T-cell (primary cell): ENCODE measurements at regions of chr15 and their contacts with region 1.

Region 1: DNA sequence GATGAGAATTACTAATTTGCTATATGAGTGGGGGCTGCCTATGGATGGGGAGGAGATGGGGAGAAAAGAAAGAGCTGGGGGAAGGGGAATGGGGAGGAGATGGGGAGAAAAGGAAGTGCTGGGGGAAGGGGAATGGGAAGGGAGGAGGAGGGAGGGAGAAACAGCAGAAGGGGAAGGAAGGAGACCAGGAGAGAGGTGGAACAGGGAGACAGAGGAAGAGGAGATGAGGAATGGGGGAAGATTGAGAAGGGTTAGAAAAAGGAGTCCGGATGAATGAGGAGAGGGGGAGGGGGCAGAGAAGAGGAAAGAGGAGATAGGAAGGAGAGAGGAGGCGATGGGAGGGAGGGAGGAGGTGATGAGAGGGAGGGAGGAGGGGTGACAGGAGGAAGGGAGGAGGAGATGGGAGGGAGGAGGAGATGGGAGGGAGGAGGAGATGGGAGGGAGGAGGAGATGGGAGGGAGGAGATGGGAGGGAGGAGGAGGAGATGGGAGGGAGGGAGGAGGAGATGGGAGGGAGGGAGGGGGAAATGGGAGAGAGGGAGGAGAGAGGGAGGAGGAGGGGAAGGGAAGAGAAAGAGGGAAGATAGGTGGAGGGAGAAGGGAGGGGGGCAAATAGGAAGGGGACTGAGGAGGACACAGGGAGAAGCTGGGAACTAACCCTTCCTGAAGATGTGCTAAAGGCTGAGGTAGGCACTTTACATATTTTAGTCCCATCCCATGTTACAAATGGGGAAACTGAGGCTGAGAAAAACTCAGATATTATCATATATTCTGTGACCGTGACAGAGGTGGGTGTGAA is 6.6 kb upstream of the BCL2L10 start:
- DNase-seq: no peak
- ATAC-seq: no peak
- H3K4me3 ChIP-seq: no peak overlapping the region
- H3K4me3 Mint-ChIP-seq: no peak overlapping the region
- H3K27ac ChIP-seq: no peak overlapping the region
- H3K27ac Mint-ChIP-seq: no peak overlapping the region
- H3K4me1 ChIP-seq: no peaks in the 10 kb centered on the region
- H3K4me1 Mint-ChIP-seq: peaks cover 8 to 16% (median 15%) of the 10 kb centered on the region in 3 donors
- H3K27me3 ChIP-seq: no peaks in the 10 kb centered on the region
- H3K27me3 Mint-ChIP-seq: no peaks in the 10 kb centered on the region

Region 2: GRCh38 chr15:52057996-52058395 is 61.2 kb before region 1 on chr15:
- CTCF ChIA-PET with region 1: no interaction called
- POLR2A ChIA-PET with region 1: interaction called in 1 of 2 experiments, 12 read pairs
- DNase-seq: no peak
- ATAC-seq: no peak
- H3K4me3 ChIP-seq: no peak overlapping the region
- H3K4me3 Mint-ChIP-seq: no peak overlapping the region
- H3K27ac ChIP-seq: no peak overlapping the region
- H3K27ac Mint-ChIP-seq: no peak overlapping the region
- H3K4me1 ChIP-seq: no peaks in the 10 kb centered on the region
- H3K4me1 Mint-ChIP-seq: no peaks in the 10 kb centered on the region
- H3K27me3 ChIP-seq: no peaks in the 10 kb centered on the region
- H3K27me3 Mint-ChIP-seq: no peaks in the 10 kb centered on the region